HAP-1 (cell line): ENCODE measurements at regions of chr6 and their contacts with region 1.

Region 1: DNA sequence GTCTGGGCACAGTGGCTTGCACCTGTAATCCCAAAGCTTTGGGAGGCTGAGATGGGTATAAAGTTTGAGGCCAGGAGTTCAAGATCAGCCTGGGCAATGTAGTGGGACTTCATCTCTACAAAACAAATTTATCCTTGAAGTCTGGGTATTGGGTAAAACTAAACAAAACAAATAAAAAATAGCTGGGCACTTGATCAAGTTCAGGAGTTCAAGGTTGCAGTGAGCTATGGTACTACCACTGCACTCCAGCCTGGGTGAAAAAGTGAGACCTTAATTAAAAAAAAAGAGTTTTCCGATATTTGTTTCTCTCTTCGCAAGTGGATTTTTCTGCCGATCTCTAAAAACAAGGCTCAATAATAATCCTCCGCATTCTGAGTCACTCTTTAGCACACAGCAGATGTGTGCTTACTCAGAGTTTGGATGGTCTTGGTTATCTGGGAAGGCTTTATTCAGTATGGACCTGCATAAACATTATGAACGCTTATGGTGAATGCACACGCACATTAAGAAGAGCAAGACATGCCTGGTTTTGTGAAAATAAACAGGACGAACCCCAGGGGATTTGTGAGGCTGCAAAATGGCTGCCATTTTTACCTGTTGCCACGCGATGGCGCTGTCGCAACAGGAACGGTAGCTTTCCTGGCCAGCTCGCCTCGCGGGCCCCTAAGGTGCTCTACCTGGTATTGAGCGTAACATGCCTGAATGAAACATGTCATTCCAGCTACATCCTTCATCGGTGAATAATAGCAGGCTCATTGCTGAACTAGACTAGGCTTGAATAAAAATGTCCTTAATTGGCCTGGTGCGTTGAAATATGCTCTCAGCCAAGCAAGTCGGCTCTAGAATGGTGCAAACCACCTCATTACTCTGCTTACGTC is 6.0 kb downstream of the OPN5 start:
- DNase-seq: peak; percentile 58 to 72
- H3K4me3 ChIP-seq: no peak overlapping the region
- H3K4me1 ChIP-seq: no peaks in the 10 kb centered on the region
- H3K27me3 ChIP-seq: peaks cover 31% of the 10 kb centered on the region

Region 2: DNA sequence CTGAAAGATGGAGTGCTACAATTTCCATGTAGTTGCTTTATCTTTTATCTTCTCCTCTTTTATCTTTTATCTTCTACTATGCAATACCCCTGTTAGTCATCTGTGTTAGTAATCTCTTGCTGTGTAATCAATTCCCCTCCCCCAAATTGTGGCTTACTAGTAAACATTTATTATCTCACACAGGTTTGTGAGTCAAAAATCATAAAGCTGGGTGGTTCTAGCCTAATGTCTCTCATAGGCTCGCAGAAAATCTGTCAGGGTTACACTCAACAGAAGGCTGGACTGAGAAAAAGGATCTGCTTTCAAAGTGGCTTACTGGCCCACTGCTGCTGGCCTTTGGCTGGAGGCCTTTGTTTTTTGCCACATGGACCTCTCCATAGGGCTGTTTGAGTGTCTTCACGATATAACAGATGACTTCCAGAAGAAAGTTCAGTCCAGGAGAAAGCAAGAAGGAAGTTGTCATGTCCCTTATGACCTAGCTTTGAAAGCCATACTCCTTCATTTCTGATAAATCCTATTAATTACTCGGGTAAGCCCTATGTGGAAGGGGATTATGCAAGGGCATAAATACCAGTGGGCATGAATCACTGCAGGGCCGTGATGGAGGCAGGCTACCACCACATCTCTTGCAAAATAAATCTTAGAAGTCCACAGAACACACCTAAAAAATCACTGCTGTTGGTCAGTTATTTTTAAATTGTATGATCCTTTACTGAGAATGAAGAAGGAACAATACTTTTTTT is 347.7 kb after region 1 on chr6:
- in situ Hi-C with region 1: no loop called
- DNase-seq: no peak
- H3K4me3 ChIP-seq: no peak overlapping the region
- H3K4me1 ChIP-seq: no peaks in the 10 kb centered on the region
- H3K27me3 ChIP-seq: no peaks in the 10 kb centered on the region

Region 3: DNA sequence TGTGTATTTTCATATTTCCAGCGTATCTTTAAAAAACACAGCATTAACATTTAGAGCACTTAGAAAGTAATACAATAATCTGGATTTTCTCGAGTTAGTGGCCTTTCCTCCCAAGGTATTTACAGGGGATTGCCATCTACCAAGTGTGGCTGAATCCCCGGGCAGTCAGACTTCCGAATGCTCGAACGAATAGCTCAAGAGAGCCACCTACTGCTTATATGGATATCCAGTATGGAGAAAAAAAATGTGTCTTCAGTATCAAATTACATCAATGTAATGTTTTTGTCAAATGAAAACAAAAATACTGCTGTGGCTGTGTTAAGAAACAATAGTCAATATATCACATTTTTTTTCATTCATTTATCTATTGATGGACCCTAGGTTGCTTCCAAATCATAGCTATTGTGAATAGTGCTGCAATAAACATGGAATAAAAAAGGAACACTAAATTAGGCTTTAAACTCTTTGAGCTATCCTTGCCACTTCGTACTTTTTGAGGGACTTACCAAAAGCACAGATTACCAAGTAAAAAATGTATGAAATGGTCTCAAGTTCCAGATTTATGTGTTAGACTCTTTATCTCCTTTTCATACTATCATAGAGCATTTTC is 977.6 kb after region 1 on chr6:
- in situ Hi-C with region 1: loop called (anchors 10 kb)
- DNase-seq: peak; percentile 73 to 86
- H3K4me3 ChIP-seq: no peak overlapping the region
- H3K4me1 ChIP-seq: peaks cover 17% of the 10 kb centered on the region
- H3K27me3 ChIP-seq: no peaks in the 10 kb centered on the region

Region 4: GRCh38 chr6:49409951-49410542 is 1622.2 kb after region 1 on chr6:
- in situ Hi-C with region 1: loop called (anchors 25 kb)
- DNase-seq: peak; percentile 34 to 84
- H3K4me3 ChIP-seq: no peak overlapping the region
- H3K4me1 ChIP-seq: no peaks in the 10 kb centered on the region
- H3K27me3 ChIP-seq: peaks cover 2% of the 10 kb centered on the region; the same call in 1 of the 2 replicates